Pancreas (tissue), 10 donors: ENCODE measurements at regions of chr4 and their contacts with region 1.

Region 1: DNA sequence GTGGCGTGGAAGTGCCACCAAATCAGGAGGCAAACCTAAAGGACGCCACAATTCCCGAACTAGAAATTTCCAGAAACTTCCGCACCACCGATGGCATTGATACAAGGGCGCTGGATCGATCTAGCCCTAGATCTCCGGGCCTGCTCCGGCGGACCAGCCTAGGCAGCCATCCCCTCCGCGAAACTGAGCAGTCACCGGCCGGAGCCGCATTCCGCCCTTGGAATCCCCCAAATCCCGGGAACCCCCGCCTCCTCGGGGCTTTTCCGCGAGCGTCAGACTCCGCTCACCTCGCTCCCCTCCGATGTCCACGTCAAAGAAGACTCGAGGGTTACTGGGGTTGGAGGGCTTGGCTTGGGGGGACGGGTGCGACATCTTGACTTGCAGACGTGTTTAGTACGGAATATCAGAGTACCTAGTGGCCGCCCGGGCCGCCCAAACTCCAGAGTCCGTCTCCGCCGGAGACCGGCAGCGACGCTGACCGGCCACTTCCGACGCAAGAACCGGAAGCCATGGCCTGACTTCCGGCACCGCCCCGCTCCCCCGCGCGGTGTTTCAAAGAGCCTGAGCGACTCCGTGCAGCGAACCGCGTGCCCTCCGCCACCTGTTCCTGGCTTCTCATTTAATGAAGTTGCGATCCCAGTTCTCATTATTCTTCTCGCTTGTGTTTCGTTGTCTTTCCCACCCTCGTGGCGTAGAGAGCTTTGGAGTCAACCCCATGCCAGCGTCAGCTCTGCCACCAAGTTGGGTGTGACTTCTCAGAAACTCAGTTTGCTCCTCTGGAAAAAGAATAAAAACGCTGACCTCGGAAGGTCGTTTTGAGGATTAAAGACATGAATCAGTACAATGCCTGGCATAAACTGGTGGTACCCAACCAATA is at the start of gene PPID:
- DNase-seq: peak; percentile 78 to 92 (median 85)
- ATAC-seq: peak; percentile 97 to 99 (median 99)
- H3K4me3 ChIP-seq: peak within 1 kb of the TSS; percentile 50 to 77 (median 68)
- H3K27ac ChIP-seq: peak within 1 kb of the TSS; percentile 63 to 95 (median 87)
- H3K4me1 ChIP-seq: peaks cover 0 to 8% (median 5%) of the 10 kb centered on the region in 3 donors
- H3K27me3 ChIP-seq: no peaks in the 10 kb centered on the region
- CTCF ChIP-seq: no peak
- total RNA-seq, gene PPID: 5.6 to 14.5 (median 8.0) TPM

Region 2: GRCh38 chr4:159206427-159206871 is 483.3 kb after region 1 on chr4:
- intact Hi-C with region 1: loop called in 1 of 3 experiments (anchors 10 kb)
- DNase-seq: no peak
- ATAC-seq: peak in 2 of 4 donors; percentile 28 to 31
- H3K4me3 ChIP-seq: no peak overlapping the region
- H3K27ac ChIP-seq: no peak overlapping the region
- H3K4me1 ChIP-seq: peaks cover 0 to 5% (median 0%) of the 10 kb centered on the region in 3 donors
- H3K27me3 ChIP-seq: no peaks in the 10 kb centered on the region
- CTCF ChIP-seq: no peak